Activated CD4-positive, alpha-beta memory T cell treated with anti-CD3 and anti-CD28 coated beads, Interleukin-2, amount 10 ng/mL, durations not matched to agents 7 days and 5 days (primary cell): ENCODE measurements at regions of chr16 and their contacts with region 1.

Region 1: DNA sequence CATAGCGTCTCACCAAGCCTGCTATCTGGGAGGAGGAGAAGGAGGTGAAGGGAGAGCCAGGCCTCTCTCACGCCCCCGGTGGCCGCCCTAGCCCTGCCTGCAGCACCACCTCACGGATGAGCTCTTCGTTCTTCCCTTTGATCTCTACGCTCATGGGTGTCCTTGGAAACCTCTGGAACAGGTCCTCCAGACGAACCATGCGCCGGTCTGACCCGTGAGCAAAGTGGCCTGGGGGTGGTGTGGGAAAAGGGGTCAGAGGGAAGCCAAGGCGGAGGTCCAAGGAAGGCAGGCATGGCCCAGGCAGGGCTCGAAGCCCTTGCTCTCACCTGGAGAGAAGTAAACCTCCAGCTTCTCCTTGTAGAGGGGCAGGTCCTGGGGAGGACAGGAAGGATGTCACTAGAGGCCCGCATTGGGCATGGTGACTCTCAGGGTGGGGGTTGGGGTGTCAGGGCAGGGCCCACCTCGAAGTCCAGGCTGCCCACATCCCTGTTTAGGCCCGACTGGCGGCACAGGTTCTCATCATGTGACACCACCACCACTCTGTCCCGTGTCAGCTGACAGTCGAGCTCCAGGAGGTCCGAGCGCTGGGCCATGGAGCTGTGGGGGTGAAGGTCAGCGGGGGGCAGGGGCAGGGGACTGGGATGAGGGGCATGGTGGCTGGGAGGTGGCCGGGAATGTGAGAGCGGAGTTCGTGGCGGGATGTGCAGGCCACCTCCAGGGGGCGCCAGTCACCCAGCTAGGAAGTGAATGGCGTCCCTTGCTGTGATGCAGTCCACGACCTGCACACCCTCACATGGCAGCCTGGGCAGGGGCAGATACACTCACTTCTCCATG is 923 bp downstream of the GDPD3 start:
- DNase-seq: peak; percentile 71
- H3K4me3 Mint-ChIP-seq: no peak overlapping the region
- H3K27ac Mint-ChIP-seq: peak overlapping the region; percentile 26
- H3K4me1 Mint-ChIP-seq: peaks cover 16% of the 10 kb centered on the region
- H3K27me3 Mint-ChIP-seq: no peaks in the 10 kb centered on the region

Region 2: GRCh38 chr16:29926005-29926710 is 186.3 kb before region 1 on chr16 and contains the start of gene KCTD13:
- CTCF ChIA-PET with region 1: no interaction called
- POLR2A ChIA-PET with region 1: no interaction called
- DNase-seq: peak; percentile 92
- H3K4me3 Mint-ChIP-seq: peak within 1 kb of the TSS; percentile 87
- H3K27ac Mint-ChIP-seq: peak within 1 kb of the TSS; percentile 87
- H3K4me1 Mint-ChIP-seq: peaks cover 36% of the 10 kb centered on the region
- H3K27me3 Mint-ChIP-seq: no peaks in the 10 kb centered on the region
- total RNA-seq, gene KCTD13: 34.5 to 36.0 TPM

Region 3: DNA sequence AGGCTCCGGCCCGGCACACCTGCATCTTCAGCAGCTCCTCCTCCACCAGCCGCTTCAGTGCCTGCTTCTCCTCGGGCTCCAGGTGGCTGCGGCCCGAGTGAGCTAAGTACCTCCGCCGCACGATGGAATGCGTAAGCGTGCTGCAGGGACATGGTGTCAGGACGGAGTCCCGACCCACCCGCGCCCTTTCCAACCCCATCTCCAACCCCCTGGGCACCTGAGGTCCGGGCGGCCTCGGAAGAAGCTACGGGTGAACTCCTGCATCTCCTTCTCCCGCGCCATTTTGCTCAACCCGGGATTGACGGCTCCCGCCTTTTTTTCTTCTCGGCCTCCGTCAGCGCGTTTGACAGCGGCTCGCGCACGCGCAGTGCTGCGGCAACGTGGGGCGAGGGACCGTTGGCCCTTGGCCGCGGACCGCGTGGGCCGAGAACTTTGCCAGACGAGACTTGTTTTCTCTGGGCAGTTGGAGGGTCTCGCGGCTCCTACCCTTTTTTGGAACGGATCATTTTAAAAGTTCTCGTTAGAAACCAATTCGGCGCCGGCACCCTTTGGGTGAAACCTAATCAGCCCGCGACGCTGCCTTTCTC is 117.0 kb before region 1 on chr16 and contains the start of gene HIRIP3:
- CTCF ChIA-PET with region 1: no interaction called
- POLR2A ChIA-PET with region 1: no interaction called
- DNase-seq: peak; percentile 90
- H3K4me3 Mint-ChIP-seq: peak within 1 kb of the TSS; percentile 94
- H3K27ac Mint-ChIP-seq: peak within 1 kb of the TSS; percentile 98
- H3K4me1 Mint-ChIP-seq: peaks cover 45% of the 10 kb centered on the region
- H3K27me3 Mint-ChIP-seq: no peaks in the 10 kb centered on the region
- total RNA-seq, gene HIRIP3: 38.7 to 40.3 TPM

Region 4: GRCh38 chr16:30096862-30097563 is 15.4 kb before region 1 on chr16:
- CTCF ChIA-PET with region 1: interaction called, 19 read pairs
- POLR2A ChIA-PET with region 1: interaction called, 5 read pairs
- DNase-seq: no peak
- H3K4me3 Mint-ChIP-seq: peak overlapping the region; percentile 58
- H3K27ac Mint-ChIP-seq: peak overlapping the region; percentile 82
- H3K4me1 Mint-ChIP-seq: peaks cover 41% of the 10 kb centered on the region
- H3K27me3 Mint-ChIP-seq: no peaks in the 10 kb centered on the region

Region 5: DNA sequence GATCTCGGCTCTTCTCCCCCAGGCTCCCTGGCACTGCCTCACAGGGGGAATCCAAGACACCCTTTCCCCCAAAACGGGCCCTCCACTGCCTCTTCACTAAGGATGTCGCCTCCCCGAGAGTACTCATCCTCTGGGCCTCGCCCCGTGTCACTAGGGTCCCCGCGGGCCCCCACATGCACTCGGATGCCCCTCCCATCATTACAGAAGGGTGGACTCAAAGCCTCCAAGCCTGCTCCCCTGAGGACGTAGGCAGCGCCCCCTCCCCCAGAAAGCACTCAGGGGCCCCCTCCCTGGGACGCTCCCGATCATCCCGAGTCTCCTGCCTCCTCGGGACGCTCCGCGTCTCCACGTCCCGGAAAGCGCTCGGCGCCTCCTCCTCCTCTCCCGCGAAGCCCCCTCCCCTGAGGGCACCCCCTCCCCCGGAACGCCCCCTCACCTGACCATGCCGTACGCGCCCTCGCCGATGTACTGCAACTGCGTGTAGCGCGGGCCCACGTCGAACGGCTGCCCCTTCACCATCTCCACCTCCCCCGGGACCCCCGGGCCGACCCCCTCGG is 10.3 kb after region 1 on chr16:
- CTCF ChIA-PET with region 1: interaction called, 15 read pairs
- POLR2A ChIA-PET with region 1: interaction called, 21 read pairs
- DNase-seq: peak; percentile 28
- H3K4me3 Mint-ChIP-seq: peak overlapping the region; percentile 88
- H3K27ac Mint-ChIP-seq: peak overlapping the region; percentile 82
- H3K4me1 Mint-ChIP-seq: peaks cover 39% of the 10 kb centered on the region
- H3K27me3 Mint-ChIP-seq: no peaks in the 10 kb centered on the region

Region 6: GRCh38 chr16:30149250-30149930 is 37.0 kb after region 1 on chr16:
- CTCF ChIA-PET with region 1: no interaction called
- POLR2A ChIA-PET with region 1: no interaction called
- DNase-seq: no peak
- H3K4me3 Mint-ChIP-seq: no peak overlapping the region
- H3K27ac Mint-ChIP-seq: no peak overlapping the region
- H3K4me1 Mint-ChIP-seq: no peaks in the 10 kb centered on the region
- H3K27me3 Mint-ChIP-seq: peaks cover 2% of the 10 kb centered on the region